ENCODE measurements at regions of chr3 and their contacts with region 1.

Region 1: DNA sequence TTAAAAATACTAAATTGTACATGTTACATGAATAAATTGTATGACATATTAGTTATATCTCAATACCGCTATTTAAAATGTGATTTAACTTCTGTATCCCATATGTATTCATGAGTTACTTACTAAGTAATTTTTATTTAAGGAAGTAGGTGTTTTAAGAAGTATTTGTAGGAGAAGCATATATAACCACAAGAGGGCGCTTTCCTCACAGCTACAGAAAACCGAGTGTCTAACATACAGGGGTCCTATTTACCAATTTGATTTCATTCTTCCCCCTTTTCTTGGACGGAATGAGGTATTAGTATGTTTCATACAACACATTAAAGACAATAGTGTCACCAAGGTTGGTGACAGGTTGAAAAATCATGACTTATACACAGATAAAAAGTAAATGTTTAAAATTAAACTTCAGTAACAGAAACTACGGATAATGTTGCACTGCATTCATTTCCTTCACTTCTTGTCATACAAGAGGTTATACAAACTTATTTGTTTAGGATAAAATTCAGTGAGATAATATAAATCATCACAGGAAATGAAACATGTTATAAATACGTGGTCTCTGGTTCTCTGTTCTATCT is 253.6 kb downstream of the MAGI1 start:
- DNase-seq: peak; percentile 80
- ATAC-seq: 0 out of 2 replicates have a peak, but pooled peaks have one; percentile 30
- H3K4me3 ChIP-seq: no peak overlapping the region
- H3K27ac ChIP-seq: no peak overlapping the region
- H3K4me1 ChIP-seq: peaks cover 6% of the 10 kb centered on the region
- H3K27me3 ChIP-seq: no peaks in the 10 kb centered on the region
- CTCF ChIP-seq: peak; percentile 82
- POLR2A ChIP-seq: no peak
- RAD21 ChIP-seq: peak; percentile 87

Region 2: GRCh38 chr3:65672871-65673815 is 112.0 kb before region 1 on chr3:
- CTCF ChIA-PET with region 1: no interaction called
- POLR2A ChIA-PET with region 1: no interaction called
- dilution Hi-C with region 1: no loop called
- in situ Hi-C with region 1: no loop called
- intact Hi-C with region 1: no loop called
- DNase-seq: peak; percentile 57
- ATAC-seq: peak; percentile 68
- H3K4me3 ChIP-seq: no peak overlapping the region
- H3K27ac ChIP-seq: no peak overlapping the region
- H3K4me1 ChIP-seq: no peaks in the 10 kb centered on the region
- H3K27me3 ChIP-seq: no peaks in the 10 kb centered on the region
- CTCF ChIP-seq: peak; percentile 66
- POLR2A ChIP-seq: no peak
- RAD21 ChIP-seq: peak; percentile 69

Region 3: DNA sequence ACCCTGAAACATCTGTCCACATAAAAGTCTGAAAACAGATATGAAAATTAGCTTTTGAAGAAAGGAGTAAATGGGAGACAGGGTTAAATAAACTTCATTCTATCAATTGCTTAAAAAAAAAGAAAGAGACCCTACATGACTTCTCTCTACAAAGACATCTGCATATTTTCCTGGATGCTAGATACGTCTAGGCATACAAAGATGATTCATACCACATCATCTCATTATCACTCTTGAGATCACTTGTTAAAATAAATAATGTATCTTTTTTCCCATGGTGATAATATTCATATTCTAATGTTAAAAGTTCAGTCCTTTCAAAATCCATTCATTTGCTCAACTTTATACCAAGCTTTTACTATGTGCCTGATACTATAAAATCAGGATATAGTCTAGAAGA is 42.2 kb before region 1 on chr3:
- CTCF ChIA-PET with region 1: no interaction called
- POLR2A ChIA-PET with region 1: no interaction called
- dilution Hi-C with region 1: no loop called
- in situ Hi-C with region 1: no loop called
- intact Hi-C with region 1: no loop called
- DNase-seq: peak; percentile 81
- ATAC-seq: peak; percentile 56; the same call in 1 of the 2 replicates
- H3K4me3 ChIP-seq: no peak overlapping the region
- H3K27ac ChIP-seq: no peak overlapping the region
- H3K4me1 ChIP-seq: no peaks in the 10 kb centered on the region; the same call in 1 of the 2 replicates
- H3K27me3 ChIP-seq: no peaks in the 10 kb centered on the region
- CTCF ChIP-seq: no peak
- POLR2A ChIP-seq: no peak
- RAD21 ChIP-seq: no peak

Region 4: GRCh38 chr3:65914740-65915367 is 129.7 kb after region 1 on chr3:
- CTCF ChIA-PET with region 1: interaction called, 3 read pairs
- POLR2A ChIA-PET with region 1: no interaction called
- dilution Hi-C with region 1: no loop called
- in situ Hi-C with region 1: no loop called
- intact Hi-C with region 1: loop called (anchors 2 kb)
- DNase-seq: no peak
- ATAC-seq: no peak; the same call in 1 of the 2 replicates
- H3K4me3 ChIP-seq: no peak overlapping the region
- H3K27ac ChIP-seq: no peak overlapping the region
- H3K4me1 ChIP-seq: peaks cover 5% of the 10 kb centered on the region; the same call in 1 of the 2 replicates
- H3K27me3 ChIP-seq: no peaks in the 10 kb centered on the region
- CTCF ChIP-seq: 0 out of 2 replicates have a peak, but pooled peaks have one; percentile 19
- POLR2A ChIP-seq: no peak
- RAD21 ChIP-seq: peak; percentile 39; the same call in 1 of the 2 replicates

Region 5: DNA sequence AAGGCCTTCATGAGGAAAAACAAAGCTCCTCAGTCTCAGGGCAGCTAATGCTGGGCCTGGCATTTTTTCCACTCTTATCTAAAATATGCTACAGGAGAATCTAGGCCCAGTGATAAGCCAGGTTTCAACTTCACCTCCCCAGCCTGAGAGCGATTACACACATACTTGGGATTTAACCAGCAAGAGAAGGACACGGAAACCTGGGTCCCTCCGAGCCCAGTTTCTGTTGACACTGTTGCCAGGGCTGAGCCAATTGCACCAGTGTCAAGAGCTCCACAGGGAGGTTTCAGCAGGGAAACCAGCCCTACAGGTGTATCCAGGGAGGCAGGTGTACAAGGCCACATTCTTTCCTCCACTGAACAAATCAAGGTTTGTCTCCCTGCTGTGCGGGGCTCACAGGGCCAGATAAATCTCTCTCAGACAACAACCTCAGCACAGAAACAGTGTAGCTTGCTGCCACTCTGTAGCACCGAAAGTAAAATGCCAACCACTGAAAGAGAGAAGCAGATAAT is 168.2 kb after region 1 on chr3:
- CTCF ChIA-PET with region 1: interaction called, 6 read pairs
- POLR2A ChIA-PET with region 1: no interaction called
- dilution Hi-C with region 1: no loop called
- in situ Hi-C with region 1: no loop called
- intact Hi-C with region 1: loop called (anchors 10 kb)
- DNase-seq: no peak
- ATAC-seq: no peak
- H3K4me3 ChIP-seq: no peak overlapping the region
- H3K27ac ChIP-seq: no peak overlapping the region
- H3K4me1 ChIP-seq: peaks cover 20% of the 10 kb centered on the region
- H3K27me3 ChIP-seq: no peaks in the 10 kb centered on the region
- CTCF ChIP-seq: no peak
- POLR2A ChIP-seq: no peak
- RAD21 ChIP-seq: no peak

Region 6: DNA sequence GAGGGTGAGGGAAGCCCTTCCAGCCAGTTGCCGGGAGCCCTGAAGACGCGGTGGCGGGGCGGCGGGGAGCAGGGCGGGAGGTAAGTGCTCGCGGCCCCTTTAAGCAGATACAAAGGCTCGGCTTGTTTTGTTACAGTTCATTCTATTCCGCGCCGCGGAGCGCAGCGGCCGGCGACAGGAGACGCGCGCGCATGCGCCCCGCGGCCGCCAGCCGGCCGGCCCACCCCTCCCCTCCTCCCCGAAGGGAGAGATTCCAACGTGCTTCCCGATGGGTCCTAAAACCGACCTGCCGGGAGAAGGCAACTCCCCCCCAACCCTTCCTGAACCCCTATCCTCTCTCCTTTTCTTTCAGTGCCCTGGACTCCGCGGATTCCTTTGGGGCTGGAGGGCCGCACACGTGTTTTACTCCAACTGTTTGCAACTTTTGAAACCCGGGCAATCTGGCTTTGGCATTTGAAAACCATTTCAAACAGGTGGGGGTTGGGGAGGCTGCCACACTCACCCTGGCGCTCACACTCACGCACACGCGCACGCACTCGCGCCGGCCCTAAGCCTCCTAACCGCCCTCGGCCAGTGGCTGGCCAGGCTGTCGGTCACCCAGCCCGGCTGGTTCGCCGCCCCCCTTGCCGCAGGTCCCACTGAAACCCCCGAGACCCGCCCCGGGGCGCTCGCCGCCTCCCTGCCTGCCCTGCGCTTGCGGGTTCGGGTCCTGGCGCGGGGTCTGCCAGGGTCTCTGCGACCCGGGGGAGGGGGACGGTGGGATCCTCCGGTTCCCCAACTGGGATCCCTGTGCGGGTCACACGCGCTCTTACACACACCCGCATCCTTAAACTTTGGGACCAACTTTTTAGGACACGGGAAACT is 253.8 kb after region 1 on chr3 and contains the start of gene MAGI1:
- CTCF ChIA-PET with region 1: no interaction called
- POLR2A ChIA-PET with region 1: no interaction called
- dilution Hi-C with region 1: no loop called
- in situ Hi-C with region 1: loop called (anchors 10 kb)
- intact Hi-C with region 1: loop called (anchors 5 kb)
- DNase-seq: peak; percentile 95
- ATAC-seq: peak; percentile 85
- H3K4me3 ChIP-seq: peak within 1 kb of the TSS; percentile 69
- H3K27ac ChIP-seq: peak within 1 kb of the TSS; percentile 88
- H3K4me1 ChIP-seq: peaks cover 29% of the 10 kb centered on the region
- H3K27me3 ChIP-seq: no peaks in the 10 kb centered on the region
- CTCF ChIP-seq: no peak
- POLR2A ChIP-seq: peak; percentile 58
- RAD21 ChIP-seq: no peak; the same call in 1 of the 2 replicates
- total RNA-seq, gene MAGI1: 24.2 and 26.4 TPM in 2 replicates

Region 7: GRCh38 chr3:66047311-66048050 is 262.3 kb after region 1 on chr3:
- CTCF ChIA-PET with region 1: no interaction called
- POLR2A ChIA-PET with region 1: no interaction called
- dilution Hi-C with region 1: no loop called
- in situ Hi-C with region 1: loop called (anchors 10 kb)
- intact Hi-C with region 1: no loop called
- DNase-seq: peak; percentile 80
- ATAC-seq: peak; percentile 88
- H3K4me3 ChIP-seq: no peak overlapping the region
- H3K27ac ChIP-seq: peak overlapping the region; percentile 1; the same call in 1 of the 2 replicates
- H3K4me1 ChIP-seq: peaks cover 6% of the 10 kb centered on the region
- H3K27me3 ChIP-seq: no peaks in the 10 kb centered on the region
- CTCF ChIP-seq: no peak
- POLR2A ChIP-seq: no peak
- RAD21 ChIP-seq: no peak

Region 8: DNA sequence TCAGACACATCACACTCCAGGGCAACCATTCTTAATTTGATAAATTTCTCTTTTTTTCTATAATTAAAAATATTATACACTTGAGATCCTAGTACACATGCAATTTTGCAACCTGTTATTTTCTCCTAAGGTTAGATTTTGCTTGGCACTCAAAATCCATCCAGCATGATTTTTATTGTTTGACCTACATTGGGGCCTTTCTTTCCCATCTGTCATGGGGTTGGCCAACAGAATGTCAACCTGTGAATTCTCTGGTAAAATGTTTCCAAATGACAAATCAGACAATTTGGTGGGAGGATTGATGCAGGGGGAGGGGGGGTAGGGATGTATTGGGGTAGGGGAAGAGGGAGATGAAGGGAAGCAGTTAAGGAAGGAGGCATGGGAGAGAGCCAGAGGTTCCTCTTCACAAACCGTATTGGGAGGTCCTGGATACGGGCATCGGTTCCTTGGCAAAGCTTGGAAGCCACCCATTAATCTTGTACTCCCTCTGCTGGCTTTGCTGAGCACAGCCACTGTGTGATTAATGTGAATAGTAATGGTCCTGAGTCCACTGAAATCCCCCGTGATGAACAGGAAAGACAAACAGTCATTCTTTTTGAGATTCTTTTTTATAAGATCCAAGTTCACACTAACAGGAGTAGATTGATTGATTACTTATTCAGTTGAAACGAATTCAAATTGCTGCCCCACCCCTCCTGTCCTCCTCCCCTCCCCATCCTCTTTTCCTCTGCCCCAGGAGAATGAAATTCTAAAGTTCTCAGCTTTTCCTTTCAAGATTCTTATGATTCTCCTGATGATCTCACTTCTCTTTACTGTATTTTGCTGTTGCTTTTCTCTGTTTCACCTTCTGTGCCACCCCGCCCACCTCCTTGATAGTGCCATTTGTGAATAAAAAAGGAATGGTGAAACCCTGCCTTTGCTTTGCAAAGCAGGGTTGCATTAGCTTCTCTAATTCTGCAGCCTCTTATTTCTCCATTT is 353.5 kb after region 1 on chr3:
- CTCF ChIA-PET with region 1: no interaction called
- POLR2A ChIA-PET with region 1: no interaction called
- dilution Hi-C with region 1: no loop called
- in situ Hi-C with region 1: loop called (anchors 10 kb)
- intact Hi-C with region 1: loop called (anchors 1 kb)
- DNase-seq: peak; percentile 68
- ATAC-seq: peak; percentile 89
- H3K4me3 ChIP-seq: no peak overlapping the region
- H3K27ac ChIP-seq: no peak overlapping the region
- H3K4me1 ChIP-seq: peaks cover under 1% of the 10 kb centered on the region
- H3K27me3 ChIP-seq: no peaks in the 10 kb centered on the region
- CTCF ChIP-seq: peak; percentile 83
- POLR2A ChIP-seq: 0 out of 2 replicates have a peak, but pooled peaks have one; percentile 23
- RAD21 ChIP-seq: peak; percentile 91

Region 9: GRCh38 chr3:66195347-66195783 is 410.2 kb after region 1 on chr3:
- CTCF ChIA-PET with region 1: no interaction called
- POLR2A ChIA-PET with region 1: no interaction called
- dilution Hi-C with region 1: no loop called
- in situ Hi-C with region 1: loop called (anchors 5 kb)
- intact Hi-C with region 1: loop called (anchors 1 kb)
- DNase-seq: peak; percentile 68
- ATAC-seq: peak; percentile 98
- H3K4me3 ChIP-seq: peak overlapping the region; percentile 38; the same call in 1 of the 2 replicates
- H3K27ac ChIP-seq: no peak overlapping the region
- H3K4me1 ChIP-seq: no peaks in the 10 kb centered on the region
- H3K27me3 ChIP-seq: peaks cover 3% of the 10 kb centered on the region; the same call in 1 of the 2 replicates
- CTCF ChIP-seq: peak; percentile 52
- POLR2A ChIP-seq: no peak
- RAD21 ChIP-seq: peak; percentile 66